ENCODE measurements at regions of chrX and their contacts with region 1.

Region 1: GRCh38 chrX:154056770-154057241 is 37.1 kb upstream of the IRAK1 start:
- DNase-seq: peak in 4 of 5 donors; percentile 32 to 45 (median 42)
- H3K4me3 ChIP-seq: no peak overlapping the region
- H3K4me3 Mint-ChIP-seq: peak overlapping the region in 7 of 8 donors; percentile 0 to 67 (median 36)
- H3K27ac ChIP-seq: no peak overlapping the region
- H3K27ac Mint-ChIP-seq: peak overlapping the region; percentile 24 to 93 (median 60)
- H3K4me1 ChIP-seq: peaks cover 66% of the 10 kb centered on the region
- H3K4me1 Mint-ChIP-seq: peaks cover 42 to 66% (median 51%) of the 10 kb centered on the region in 4 donors
- H3K27me3 ChIP-seq: no peaks in the 10 kb centered on the region
- H3K27me3 Mint-ChIP-seq: no peaks in the 10 kb centered on the region

Region 2: DNA sequence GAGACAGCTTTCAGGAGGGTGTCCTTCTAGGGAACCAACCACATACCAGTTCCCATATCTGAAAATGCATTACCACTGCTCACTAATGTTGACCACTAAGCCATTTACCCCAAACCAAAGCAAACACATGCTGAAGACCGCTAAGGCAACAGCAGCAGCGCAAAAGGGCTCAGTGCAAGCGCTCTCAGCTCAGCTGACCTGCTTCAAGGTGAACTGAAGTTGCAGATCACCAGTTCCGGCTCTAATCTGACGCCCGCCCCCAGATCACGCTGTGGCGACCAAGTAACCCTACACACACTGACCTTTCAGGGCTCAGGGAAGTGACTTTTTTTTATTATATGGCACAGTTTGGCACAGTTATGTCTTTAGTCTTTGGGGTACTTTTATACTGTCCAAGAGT is 34.9 kb after region 1 on chrX:
- CTCF ChIA-PET with region 1: interaction called, 5 read pairs
- POLR2A ChIA-PET with region 1: interaction called, 4 read pairs
- intact Hi-C with region 1: loop called (anchors 5 kb)
- DNase-seq: no peak
- H3K4me3 ChIP-seq: no peak overlapping the region
- H3K4me3 Mint-ChIP-seq: peak overlapping the region in 4 of 8 donors; percentile 37 to 61 (median 50)
- H3K27ac ChIP-seq: peak overlapping the region; percentile 34
- H3K27ac Mint-ChIP-seq: peak overlapping the region in 3 of 7 donors; percentile 25 to 72 (median 63)
- H3K4me1 ChIP-seq: peaks cover 68% of the 10 kb centered on the region
- H3K4me1 Mint-ChIP-seq: peaks cover 43 to 73% (median 53%) of the 10 kb centered on the region in 4 donors
- H3K27me3 ChIP-seq: no peaks in the 10 kb centered on the region
- H3K27me3 Mint-ChIP-seq: no peaks in the 10 kb centered on the region

Region 3: GRCh38 chrX:154370882-154371770 is 314.3 kb after region 1 on chrX:
- CTCF ChIA-PET with region 1: no interaction called
- POLR2A ChIA-PET with region 1: no interaction called
- intact Hi-C with region 1: no loop called
- DNase-seq: peak; percentile 89 to 92 (median 92)
- H3K4me3 ChIP-seq: peak overlapping the region in 1 of 2 donors; percentile 59
- H3K4me3 Mint-ChIP-seq: peak overlapping the region; percentile 78 to 93 (median 86)
- H3K27ac ChIP-seq: peak overlapping the region; percentile 92
- H3K27ac Mint-ChIP-seq: peak overlapping the region; percentile 78 to 94 (median 87)
- H3K4me1 ChIP-seq: peaks cover 51% of the 10 kb centered on the region
- H3K4me1 Mint-ChIP-seq: peaks cover 3 to 42% (median 25%) of the 10 kb centered on the region in 4 donors
- H3K27me3 ChIP-seq: no peaks in the 10 kb centered on the region
- H3K27me3 Mint-ChIP-seq: no peaks in the 10 kb centered on the region